ENCODE measurements at regions of chr9 and their contacts with region 1.

Region 1: DNA sequence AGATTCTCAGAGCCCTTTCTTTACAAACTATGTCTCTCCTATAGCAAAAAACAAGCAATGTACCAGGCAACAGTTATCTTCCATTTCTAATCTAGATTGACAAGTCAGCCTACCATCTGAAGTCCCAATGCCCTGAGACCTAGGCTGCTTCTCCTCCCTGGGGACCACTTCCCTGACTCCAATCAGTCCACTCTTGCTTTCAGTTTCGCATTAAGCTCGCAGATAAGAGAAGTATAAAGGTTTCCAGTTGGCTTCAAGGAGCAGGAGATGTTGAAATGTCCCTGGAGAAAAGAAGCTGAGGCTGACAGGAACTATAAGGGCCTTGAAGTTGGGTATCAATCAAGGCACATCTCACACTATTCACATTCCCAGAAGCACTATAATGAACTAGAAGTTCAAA is 32.3 kb downstream of the ERP44 start:
- DNase-seq: peak; percentile 25
- ATAC-seq: peak; percentile 78
- H3K4me3 ChIP-seq: no peak overlapping the region
- H3K27ac ChIP-seq: no peak overlapping the region
- H3K4me1 ChIP-seq: peaks cover 7% of the 10 kb centered on the region
- H3K27me3 ChIP-seq: no peaks in the 10 kb centered on the region
- CTCF ChIP-seq: no peak
- EP300 ChIP-seq: no peak
- POLR2A ChIP-seq: no peak
- RAD21 ChIP-seq: no peak

Region 2: GRCh38 chr9:100098887-100099721 is 32.6 kb after region 1 on chr9 and contains the starts of genes ERP44 and INVS:
- CTCF ChIA-PET with region 1: interaction called, 4 read pairs
- POLR2A ChIA-PET with region 1: interaction called, 4 read pairs
- RAD21 ChIA-PET with region 1: interaction called, 3 read pairs
- SMC1A ChIA-PET with region 1: interaction called, 11 read pairs
- in situ Hi-C with region 1: no loop called
- intact Hi-C with region 1: no loop called
- DNase-seq: peak; percentile 97
- ATAC-seq: peak; percentile 98
- H3K4me3 ChIP-seq: peak within 1 kb of the TSS; percentile 99
- H3K27ac ChIP-seq: peak within 1 kb of the TSS; percentile 92
- H3K4me1 ChIP-seq: no peaks in the 10 kb centered on the region
- H3K27me3 ChIP-seq: no peaks in the 10 kb centered on the region
- CTCF ChIP-seq: no peak
- EP300 ChIP-seq: no peak
- POLR2A ChIP-seq: peak; percentile 96
- RAD21 ChIP-seq: 0 out of 2 replicates have a peak, but pooled peaks have one; percentile 1
- polyA plus RNA-seq, gene ERP44: 13.5 to 14.4 TPM
- polyA plus RNA-seq, gene INVS: 0.93 to 1.0 TPM

Region 3: DNA sequence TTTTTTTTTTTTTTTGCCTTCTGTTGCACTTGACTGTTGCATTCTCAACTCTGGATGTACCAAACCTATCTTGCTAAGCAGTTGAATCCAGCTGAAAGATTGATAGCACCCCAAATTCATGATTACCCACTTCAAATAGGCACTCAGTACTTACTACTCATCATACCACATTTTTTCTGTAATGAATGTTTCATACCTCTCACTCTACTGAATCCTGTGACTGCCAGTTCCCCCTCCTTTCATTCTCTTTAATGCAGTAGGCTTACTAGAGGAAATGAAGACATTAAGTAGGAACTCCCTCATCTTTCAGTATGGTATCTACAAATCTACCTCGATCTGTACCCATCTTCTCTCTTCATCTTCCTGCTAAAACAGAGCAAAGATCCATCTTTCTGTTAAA is 39.3 kb after region 1 on chr9:
- CTCF ChIA-PET with region 1: interaction called, 3 read pairs
- POLR2A ChIA-PET with region 1: interaction called, 13 read pairs
- RAD21 ChIA-PET with region 1: no interaction called
- SMC1A ChIA-PET with region 1: interaction called, 3 read pairs
- in situ Hi-C with region 1: no loop called
- intact Hi-C with region 1: no loop called
- DNase-seq: no peak
- ATAC-seq: no peak
- H3K4me3 ChIP-seq: no peak overlapping the region
- H3K27ac ChIP-seq: no peak overlapping the region
- H3K4me1 ChIP-seq: no peaks in the 10 kb centered on the region
- H3K27me3 ChIP-seq: no peaks in the 10 kb centered on the region
- CTCF ChIP-seq: no peak
- EP300 ChIP-seq: no peak
- POLR2A ChIP-seq: no peak
- RAD21 ChIP-seq: no peak

Region 4: DNA sequence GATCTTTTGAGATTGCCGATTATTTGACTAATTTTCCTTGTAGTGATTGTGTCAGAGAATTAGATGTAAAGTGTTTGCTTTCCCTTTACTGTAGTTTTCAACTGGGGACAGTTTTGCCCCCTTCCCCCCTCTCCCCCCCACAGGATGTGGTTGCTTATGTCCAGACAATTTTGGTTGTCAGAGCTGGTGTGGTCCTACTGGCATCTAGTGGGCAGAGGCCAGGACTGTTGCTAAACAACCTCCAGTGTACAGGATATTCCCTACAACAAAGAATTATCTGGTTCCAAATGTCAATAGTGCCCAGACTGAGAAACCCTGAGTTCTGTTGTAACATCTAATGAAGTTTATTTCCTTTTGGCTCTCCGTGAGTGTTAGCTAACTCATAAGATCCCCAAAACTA is 426.4 kb after region 1 on chr9:
- CTCF ChIA-PET with region 1: no interaction called
- POLR2A ChIA-PET with region 1: no interaction called
- RAD21 ChIA-PET with region 1: no interaction called
- SMC1A ChIA-PET with region 1: no interaction called
- in situ Hi-C with region 1: no loop called
- intact Hi-C with region 1: no loop called
- DNase-seq: no peak
- ATAC-seq: peak; percentile 51
- H3K4me3 ChIP-seq: no peak overlapping the region
- H3K27ac ChIP-seq: no peak overlapping the region
- H3K4me1 ChIP-seq: no peaks in the 10 kb centered on the region
- H3K27me3 ChIP-seq: no peaks in the 10 kb centered on the region
- CTCF ChIP-seq: peak in 2 of 3 experiments; percentile 9 to 15; a peak in 1 of 6 replicates
- EP300 ChIP-seq: no peak
- POLR2A ChIP-seq: no peak
- RAD21 ChIP-seq: peak; percentile 49